CD4-positive, alpha-beta memory T cell (primary cell): ENCODE measurements at regions of chr2 and their contacts with region 1.

Region 1: DNA sequence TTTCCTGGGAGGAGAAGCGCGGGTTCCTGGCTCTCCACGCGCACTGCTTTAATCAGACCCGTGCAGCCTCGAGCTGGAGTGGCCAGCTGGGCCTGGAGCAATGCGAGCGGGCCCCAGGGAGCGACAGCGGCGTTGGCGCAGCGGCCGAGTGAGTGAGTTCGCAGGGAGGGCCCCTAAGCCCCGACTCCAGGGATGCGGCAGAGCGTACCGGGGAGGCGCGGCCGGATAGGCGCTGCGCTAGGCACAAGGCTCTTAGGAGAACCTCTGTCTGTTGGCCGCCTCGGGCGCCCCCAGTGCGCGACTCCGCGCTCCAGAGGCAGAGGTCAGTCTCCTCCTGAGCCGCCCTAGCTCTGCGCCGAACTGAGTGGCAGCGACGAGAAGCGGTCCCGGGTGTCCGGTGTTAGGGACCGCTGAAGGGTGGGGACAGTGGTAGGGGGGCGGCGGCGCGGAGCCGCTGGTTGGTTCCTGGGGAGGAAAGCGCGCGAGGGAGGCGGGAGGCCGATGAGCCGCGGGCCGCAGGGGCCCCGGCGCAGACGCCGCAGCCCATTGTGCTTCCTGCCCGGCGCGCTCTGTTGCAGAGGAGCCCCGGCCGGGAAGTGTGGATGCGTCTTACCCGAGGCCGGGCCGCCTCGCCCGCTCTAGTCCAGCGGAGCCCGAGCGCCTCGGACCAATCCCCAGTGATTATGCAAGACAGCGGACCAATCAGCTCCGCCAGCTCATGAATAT is 410 bp upstream of the DLX1 start:
- DNase-seq: peak in 4 of 5 donors; percentile 48 to 54 (median 51)
- H3K4me3 ChIP-seq: peak overlapping the region; percentile 28 to 42
- H3K4me3 Mint-ChIP-seq: peak overlapping the region; percentile 73 to 89 (median 78)
- H3K27ac ChIP-seq: no peak overlapping the region
- H3K27ac Mint-ChIP-seq: peak overlapping the region in 6 of 7 donors; percentile 24 to 99 (median 86)
- H3K4me1 ChIP-seq: peaks cover 67% of the 10 kb centered on the region
- H3K4me1 Mint-ChIP-seq: peaks cover 27 to 72% (median 58%) of the 10 kb centered on the region in 4 donors
- H3K27me3 ChIP-seq: peaks cover 99% of the 10 kb centered on the region
- H3K27me3 Mint-ChIP-seq: peaks cover 72 to 82% of the 10 kb centered on the region in 2 donors

Region 2: DNA sequence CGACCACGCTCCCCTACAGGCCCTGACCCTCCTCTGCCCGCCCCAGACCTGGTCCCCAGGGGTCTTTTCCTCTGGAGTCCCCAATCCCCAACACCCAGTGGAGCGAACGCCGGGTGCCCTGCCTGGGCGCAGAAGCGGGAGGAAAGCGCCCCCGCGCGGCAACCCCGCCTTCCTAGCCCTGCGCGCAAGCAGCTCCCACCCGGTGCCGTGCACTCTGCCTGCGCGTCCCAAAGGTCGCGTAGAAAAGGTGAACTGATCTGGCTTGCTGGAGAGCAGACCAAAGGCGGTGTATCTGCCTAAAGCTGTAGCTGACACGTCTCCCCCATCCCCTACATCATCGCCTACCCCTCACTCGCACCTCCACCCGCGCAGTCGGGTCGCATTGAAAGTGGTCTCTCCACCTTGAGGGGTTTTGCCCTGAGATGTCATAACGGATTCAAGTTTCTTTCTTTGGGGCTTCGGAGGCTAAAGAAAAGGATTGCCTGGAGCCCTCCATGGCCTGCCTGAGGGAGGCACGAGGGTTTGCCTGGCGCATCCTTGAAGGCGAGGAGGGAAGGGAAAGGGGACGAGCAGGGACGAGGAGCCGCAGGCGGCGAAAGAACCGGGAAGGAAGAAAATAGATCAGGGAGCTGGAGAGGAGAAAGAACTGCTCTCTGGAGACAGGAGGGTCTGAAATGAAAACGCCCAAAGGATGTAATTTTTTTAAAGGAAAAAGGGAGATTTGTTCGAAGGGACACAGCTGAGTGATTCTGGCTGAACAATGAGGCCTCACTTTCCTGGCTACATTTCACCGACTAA is 1262.4 kb before region 1 on chr2:
- CTCF ChIA-PET with region 1: no interaction called
- POLR2A ChIA-PET with region 1: no interaction called
- intact Hi-C with region 1: loop called (anchors 10 kb)
- DNase-seq: no peak
- H3K4me3 ChIP-seq: peak overlapping the region in 1 of 2 donors; percentile 51
- H3K4me3 Mint-ChIP-seq: peak overlapping the region; percentile 67 to 94 (median 77)
- H3K27ac ChIP-seq: no peak overlapping the region
- H3K27ac Mint-ChIP-seq: peak overlapping the region in 2 of 7 donors; percentile 56 to 68
- H3K4me1 ChIP-seq: peaks cover 53% of the 10 kb centered on the region
- H3K4me1 Mint-ChIP-seq: peaks cover 33 to 61% (median 43%) of the 10 kb centered on the region in 4 donors
- H3K27me3 ChIP-seq: peaks cover 54% of the 10 kb centered on the region
- H3K27me3 Mint-ChIP-seq: peaks cover 60 to 77% of the 10 kb centered on the region in 2 donors

Region 3: DNA sequence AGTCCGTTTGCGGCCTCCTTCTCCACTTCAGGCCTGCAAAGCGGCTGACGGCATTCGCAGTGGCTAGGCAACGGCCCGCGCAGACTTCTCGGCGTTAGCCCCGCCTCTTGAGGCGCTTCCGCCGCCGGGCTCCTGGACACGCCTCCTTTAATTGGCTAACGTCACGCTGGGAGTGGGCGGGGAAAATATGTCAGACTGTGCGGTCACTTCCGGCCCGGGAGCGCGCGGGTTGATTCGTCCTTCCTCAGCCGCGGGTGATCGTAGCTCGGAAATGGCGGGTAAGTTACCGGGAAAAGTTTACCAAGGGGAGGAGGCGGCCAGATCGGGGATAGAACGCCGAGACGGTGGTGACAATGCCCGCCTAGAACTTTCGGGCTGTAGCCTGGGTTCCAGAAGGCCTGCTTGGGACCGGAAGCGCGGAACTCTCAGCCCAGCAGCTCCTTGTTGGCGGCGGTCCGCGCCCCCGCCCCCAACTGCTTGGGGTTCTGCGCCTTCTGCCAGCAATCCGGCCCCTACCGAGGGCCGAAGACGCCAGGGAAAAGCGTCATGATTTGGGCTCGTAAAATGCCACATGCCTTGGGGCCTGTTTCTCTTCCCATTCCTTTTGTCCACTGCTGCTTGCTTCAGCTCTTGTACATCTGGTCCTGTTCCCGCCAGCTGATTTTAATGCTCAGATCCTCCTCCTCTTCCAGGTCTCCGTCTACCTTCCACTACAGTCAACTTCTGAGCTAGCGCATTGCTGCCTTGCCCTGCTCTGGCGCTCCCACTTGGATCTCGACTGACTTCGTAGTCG is 162.5 kb before region 1 on chr2 and contains the start of gene HAT1:
- CTCF ChIA-PET with region 1: no interaction called
- POLR2A ChIA-PET with region 1: no interaction called
- intact Hi-C with region 1: no loop called
- DNase-seq: peak; percentile 96 to 98 (median 97)
- H3K4me3 ChIP-seq: peak within 1 kb of the TSS; percentile 70 to 88
- H3K4me3 Mint-ChIP-seq: peak within 1 kb of the TSS; percentile 98 to 100 (median 100)
- H3K27ac ChIP-seq: peak within 1 kb of the TSS; percentile 95
- H3K27ac Mint-ChIP-seq: peak within 1 kb of the TSS; percentile 93 to 100 (median 99)
- H3K4me1 ChIP-seq: peaks cover 39% of the 10 kb centered on the region
- H3K4me1 Mint-ChIP-seq: peaks cover 18 to 46% (median 33%) of the 10 kb centered on the region in 4 donors
- H3K27me3 ChIP-seq: no peaks in the 10 kb centered on the region
- H3K27me3 Mint-ChIP-seq: no peaks in the 10 kb centered on the region
- total RNA-seq, gene HAT1: 22.6 to 27.7 TPM

Region 4: GRCh38 chr2:172013396-172013795 is 71.5 kb before region 1 on chr2:
- CTCF ChIA-PET with region 1: no interaction called
- POLR2A ChIA-PET with region 1: no interaction called
- intact Hi-C with region 1: no loop called
- DNase-seq: no peak
- H3K4me3 ChIP-seq: no peak overlapping the region
- H3K4me3 Mint-ChIP-seq: no peak overlapping the region
- H3K27ac ChIP-seq: no peak overlapping the region
- H3K27ac Mint-ChIP-seq: no peak overlapping the region
- H3K4me1 ChIP-seq: peaks cover 20% of the 10 kb centered on the region
- H3K4me1 Mint-ChIP-seq: peaks cover 18 to 25% (median 22%) of the 10 kb centered on the region in 4 donors
- H3K27me3 ChIP-seq: no peaks in the 10 kb centered on the region
- H3K27me3 Mint-ChIP-seq: no peaks in the 10 kb centered on the region

Region 5: DNA sequence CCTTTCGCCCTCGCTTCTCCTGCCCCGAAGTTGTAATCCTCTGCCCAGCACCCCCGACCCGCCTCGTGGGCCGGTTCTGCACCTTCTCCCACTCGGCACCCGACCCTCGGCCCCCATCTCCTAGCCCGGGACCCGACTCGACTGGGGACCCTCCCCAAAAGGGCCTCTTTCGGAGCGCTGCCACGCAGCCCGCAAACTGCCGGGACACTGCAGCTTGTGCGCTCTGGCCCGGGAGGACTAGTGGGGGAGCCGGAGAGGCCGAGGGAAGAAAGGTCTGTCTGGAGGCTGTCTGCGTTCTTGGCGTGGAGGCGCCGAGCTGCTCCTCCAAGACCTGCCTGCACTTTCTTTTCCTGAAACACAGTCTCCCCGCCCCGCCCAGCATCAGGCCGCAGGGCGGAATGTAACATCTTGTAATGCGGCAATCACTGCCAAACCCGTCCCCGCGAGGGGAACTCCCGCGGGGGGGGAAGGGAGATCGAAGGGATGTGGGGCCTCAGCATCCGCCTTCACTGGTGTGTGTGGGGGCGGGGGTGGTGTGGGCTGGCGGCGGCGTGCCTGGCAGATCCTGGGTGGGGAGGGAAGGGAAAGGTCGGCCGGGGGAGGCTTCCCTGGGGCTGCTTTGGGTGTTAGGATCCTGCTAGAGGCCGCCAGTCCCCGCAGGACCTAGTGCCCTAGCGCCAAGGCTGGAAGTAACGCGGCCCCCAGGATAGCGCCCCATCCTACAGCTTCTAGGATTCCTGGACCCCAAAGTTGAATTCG is 10.4 kb after region 1 on chr2:
- CTCF ChIA-PET with region 1: interaction called, 3 read pairs
- POLR2A ChIA-PET with region 1: interaction called, 186 read pairs
- intact Hi-C with region 1: loop called (anchors 1 kb)
- DNase-seq: peak; percentile 80 to 88 (median 83)
- H3K4me3 ChIP-seq: peak overlapping the region in 1 of 2 donors; percentile 50
- H3K4me3 Mint-ChIP-seq: peak overlapping the region; percentile 82 to 90 (median 87)
- H3K27ac ChIP-seq: no peak overlapping the region
- H3K27ac Mint-ChIP-seq: peak overlapping the region; percentile 29 to 93 (median 88)
- H3K4me1 ChIP-seq: peaks cover 71% of the 10 kb centered on the region
- H3K4me1 Mint-ChIP-seq: peaks cover 21 to 62% (median 32%) of the 10 kb centered on the region in 4 donors
- H3K27me3 ChIP-seq: peaks cover 97% of the 10 kb centered on the region
- H3K27me3 Mint-ChIP-seq: peaks cover 55 to 57% of the 10 kb centered on the region in 2 donors

Region 6: GRCh38 chr2:172373766-172374165 is 288.9 kb after region 1 on chr2:
- CTCF ChIA-PET with region 1: no interaction called
- POLR2A ChIA-PET with region 1: no interaction called
- intact Hi-C with region 1: no loop called
- DNase-seq: no peak
- H3K4me3 ChIP-seq: no peak overlapping the region
- H3K4me3 Mint-ChIP-seq: no peak overlapping the region
- H3K27ac ChIP-seq: no peak overlapping the region
- H3K27ac Mint-ChIP-seq: peak overlapping the region in 1 of 7 donors; percentile 2
- H3K4me1 ChIP-seq: no peaks in the 10 kb centered on the region
- H3K4me1 Mint-ChIP-seq: no peaks in the 10 kb centered on the region
- H3K27me3 ChIP-seq: no peaks in the 10 kb centered on the region
- H3K27me3 Mint-ChIP-seq: peaks cover 2 to 10% of the 10 kb centered on the region in 2 donors